HEK293 (cell line): ENCODE measurements at regions of chr12 and their contacts with region 1.

Region 1: GRCh38 chr12:21527451-21528180 is 1.5 kb downstream of the SPX start:
- H3K4me3 ChIP-seq: peak overlapping the region; percentile 72
- H3K27ac ChIP-seq: peak overlapping the region; percentile 28; the same call in 1 of the 2 replicates
- H3K4me1 ChIP-seq: peaks cover 8% of the 10 kb centered on the region; the same call in 1 of the 2 replicates
- CTCF ChIP-seq: no peak; the same call in 1 of the 2 replicates

Region 2: GRCh38 chr12:21501379-21501956 is 26.1 kb before region 1 on chr12 and contains the starts of genes GOLT1B and RECQL:
- CTCF ChIA-PET with region 1: interaction called, 4 read pairs
- POLR2A ChIA-PET with region 1: interaction called, 13 read pairs
- H3K4me3 ChIP-seq: peak within 1 kb of the TSS; percentile 85
- H3K27ac ChIP-seq: peak within 1 kb of the TSS; percentile 81
- H3K4me1 ChIP-seq: peaks cover 11% of the 10 kb centered on the region
- CTCF ChIP-seq: no peak

Region 3: GRCh38 chr12:21657326-21658077 is 129.9 kb after region 1 on chr12 and contains the start of gene LDHB:
- CTCF ChIA-PET with region 1: no interaction called
- POLR2A ChIA-PET with region 1: interaction called, 10 read pairs
- H3K4me3 ChIP-seq: peak within 1 kb of the TSS; percentile 98
- H3K27ac ChIP-seq: peak within 1 kb of the TSS; percentile 82
- H3K4me1 ChIP-seq: no peaks in the 10 kb centered on the region
- CTCF ChIP-seq: no peak; the same call in 1 of the 2 replicates